Heart right ventricle (tissue), 16 donors: ENCODE measurements at regions of chr15 and their contacts with region 1.

Region 1: DNA sequence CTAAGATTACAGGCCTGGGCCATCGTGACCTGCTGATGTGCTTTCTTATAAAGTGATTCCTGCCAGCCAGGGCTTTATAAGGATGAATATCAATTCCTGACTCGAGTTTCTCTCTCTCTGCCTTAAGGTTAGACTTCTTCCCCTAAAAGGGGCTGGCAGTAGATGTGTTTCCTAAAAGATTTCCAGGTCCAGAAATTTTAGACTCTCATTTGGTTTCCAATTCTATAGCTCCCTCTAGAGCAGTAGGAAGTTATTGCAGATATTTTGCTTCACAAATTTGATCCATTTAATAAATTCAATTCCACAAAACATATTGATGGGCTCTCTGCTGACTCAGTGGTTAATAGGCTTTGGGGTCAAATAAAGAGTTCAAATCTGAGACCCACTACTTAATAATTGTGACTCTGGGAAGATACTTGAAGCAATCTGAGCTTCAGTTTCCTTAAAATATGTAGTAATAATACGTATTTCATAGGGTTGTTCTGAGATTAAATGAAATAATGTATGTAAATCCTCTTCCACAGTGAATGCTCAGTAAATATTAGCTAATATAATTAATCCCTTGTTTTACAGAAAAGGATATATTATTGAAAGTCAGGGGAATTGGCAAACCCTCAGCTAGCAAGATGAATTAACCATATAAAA is 2.1 kb downstream of the TRIM69 start:
- DNase-seq: no peak
- ATAC-seq: peak in 6 of 8 donors; percentile 27 to 59 (median 40)
- H3K4me3 ChIP-seq: no peak overlapping the region
- H3K27ac ChIP-seq: peak overlapping the region in 1 of 10 donors; percentile 12
- H3K4me1 ChIP-seq: peaks cover 0 to 43% (median 15%) of the 10 kb centered on the region in 9 donors
- H3K27me3 ChIP-seq: no peaks in the 10 kb centered on the region
- CTCF ChIP-seq: peak; percentile 49 to 87 (median 79)

Region 2: GRCh38 chr15:44529864-44530604 is 208.4 kb before region 1 on chr15:
- intact Hi-C with region 1: no loop called
- DNase-seq: no peak
- ATAC-seq: no peak
- H3K4me3 ChIP-seq: no peak overlapping the region
- H3K27ac ChIP-seq: no peak overlapping the region
- H3K4me1 ChIP-seq: peaks cover 0 to 4% (median 0%) of the 10 kb centered on the region in 9 donors
- H3K27me3 ChIP-seq: no peaks in the 10 kb centered on the region
- CTCF ChIP-seq: no peak

Region 3: DNA sequence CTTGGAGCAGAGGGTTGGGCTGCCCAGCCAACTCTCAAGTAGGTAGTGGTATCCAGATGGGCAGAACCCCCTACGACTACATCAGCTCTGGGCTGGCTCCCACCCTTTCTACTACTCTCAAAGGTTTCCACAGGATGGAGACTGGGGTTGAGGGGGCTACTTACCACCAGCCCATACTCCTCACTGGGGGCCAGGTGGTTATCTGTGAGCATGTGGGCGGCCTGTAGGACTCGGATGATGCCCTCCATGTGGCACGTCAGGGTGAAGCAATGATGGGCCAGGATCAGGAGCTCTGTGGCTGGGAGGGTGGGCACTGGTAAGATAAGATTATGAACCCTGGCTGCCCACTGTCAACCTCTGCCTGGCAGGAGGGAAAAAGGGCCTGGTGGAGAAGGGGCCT is 168.1 kb before region 1 on chr15:
- intact Hi-C with region 1: loop called in 2 of 10 experiments (anchors 5 to 10 kb)
- DNase-seq: no peak
- ATAC-seq: peak in 3 of 8 donors; percentile 4 to 31 (median 21)
- H3K4me3 ChIP-seq: no peak overlapping the region
- H3K27ac ChIP-seq: no peak overlapping the region
- H3K4me1 ChIP-seq: peaks cover 0 to 7% (median 0%) of the 10 kb centered on the region in 9 donors
- H3K27me3 ChIP-seq: no peaks in the 10 kb centered on the region
- CTCF ChIP-seq: no peak

Region 4: DNA sequence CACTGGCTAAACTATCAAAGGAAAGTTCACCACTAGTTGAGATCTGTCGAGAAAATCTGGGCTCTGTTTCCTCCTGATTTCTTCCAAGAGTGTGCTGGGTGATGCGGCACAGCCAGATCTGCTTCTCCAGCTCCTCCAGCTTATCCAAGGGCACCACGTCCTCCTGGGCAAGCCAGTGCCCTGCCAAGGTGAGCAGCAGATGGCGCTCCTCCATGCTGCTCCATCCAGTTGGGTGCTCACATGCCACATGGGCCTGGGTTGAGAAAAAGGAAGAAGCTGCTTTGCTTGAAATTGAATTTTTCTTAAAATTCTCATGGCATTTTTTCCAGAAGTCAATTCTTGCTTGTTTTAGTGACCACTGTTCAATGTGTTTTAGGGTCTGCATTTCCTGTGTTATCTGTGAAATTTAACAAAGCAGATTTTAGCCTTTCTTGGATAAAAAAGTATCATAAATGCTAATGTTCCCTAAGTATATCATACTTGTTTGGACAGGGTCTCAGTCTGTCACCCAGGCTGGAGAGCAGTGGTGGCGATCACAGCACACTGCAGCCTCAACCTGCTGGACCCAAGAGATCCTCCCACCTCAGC is 154.2 kb before region 1 on chr15:
- intact Hi-C with region 1: loop called in 7 of 10 experiments (anchors 5 to 10 kb)
- DNase-seq: peak in 1 of 2 donors; percentile 38
- ATAC-seq: peak in 6 of 8 donors; percentile 49 to 75 (median 70)
- H3K4me3 ChIP-seq: no peak overlapping the region
- H3K27ac ChIP-seq: no peak overlapping the region
- H3K4me1 ChIP-seq: no peaks in the 10 kb centered on the region
- H3K27me3 ChIP-seq: no peaks in the 10 kb centered on the region
- CTCF ChIP-seq: peak in 7 of 9 donors; percentile 18 to 54 (median 48)